ENCODE measurements at regions of chr5 and their contacts with region 1.

Region 1: GRCh38 chr5:138132543-138132942 is 6.7 kb downstream of the NME5 start:
- DNase-seq: no peak
- ATAC-seq: no peak

Region 2: DNA sequence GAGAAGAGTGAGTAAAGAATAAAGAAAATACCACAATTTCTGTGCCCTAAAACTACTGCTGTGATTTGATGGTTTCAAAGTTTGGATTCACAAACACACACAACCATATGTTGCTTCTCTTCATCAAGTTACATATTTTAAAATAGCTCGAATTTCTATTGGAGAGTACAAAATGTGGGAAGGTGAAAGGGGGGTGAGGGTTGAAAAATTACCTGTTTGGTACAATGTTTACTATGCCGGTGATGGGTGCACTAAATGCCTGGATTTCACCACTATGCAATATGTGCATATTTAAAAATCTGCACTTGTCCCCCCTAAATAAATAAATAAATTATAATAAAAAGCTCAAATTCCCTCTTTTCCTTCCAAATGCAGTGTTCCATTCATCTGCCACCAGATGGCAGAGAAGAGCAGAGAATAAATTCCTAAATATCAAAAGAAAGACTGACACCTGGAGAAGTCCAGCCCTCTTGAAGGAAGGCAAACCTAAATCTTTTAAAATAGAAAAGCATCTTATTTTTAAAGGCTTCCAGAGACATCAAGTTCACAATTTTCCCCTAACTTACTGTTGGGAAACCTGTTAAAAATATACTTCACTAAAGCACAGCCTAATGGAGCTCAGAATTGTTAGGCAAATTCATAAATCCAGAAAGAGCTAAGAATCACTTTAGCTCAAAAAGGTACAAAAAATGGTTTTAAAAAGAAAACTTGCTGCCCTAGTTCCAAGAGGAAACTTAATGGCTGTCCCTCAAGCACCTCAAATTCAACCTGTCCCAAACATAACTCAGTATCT is 353.6 kb before region 1 on chr5:
- intact Hi-C with region 1: loop called in 1 of 2 experiments (anchors 5 kb)
- DNase-seq: no peak
- ATAC-seq: peak; percentile 33

Region 3: GRCh38 chr5:138035605-138036537 is 96.7 kb before region 1 on chr5:
- intact Hi-C with region 1: loop called in 1 of 2 experiments (anchors 5 kb)
- DNase-seq: peak; percentile 52 to 55
- ATAC-seq: peak; percentile 43

Region 4: DNA sequence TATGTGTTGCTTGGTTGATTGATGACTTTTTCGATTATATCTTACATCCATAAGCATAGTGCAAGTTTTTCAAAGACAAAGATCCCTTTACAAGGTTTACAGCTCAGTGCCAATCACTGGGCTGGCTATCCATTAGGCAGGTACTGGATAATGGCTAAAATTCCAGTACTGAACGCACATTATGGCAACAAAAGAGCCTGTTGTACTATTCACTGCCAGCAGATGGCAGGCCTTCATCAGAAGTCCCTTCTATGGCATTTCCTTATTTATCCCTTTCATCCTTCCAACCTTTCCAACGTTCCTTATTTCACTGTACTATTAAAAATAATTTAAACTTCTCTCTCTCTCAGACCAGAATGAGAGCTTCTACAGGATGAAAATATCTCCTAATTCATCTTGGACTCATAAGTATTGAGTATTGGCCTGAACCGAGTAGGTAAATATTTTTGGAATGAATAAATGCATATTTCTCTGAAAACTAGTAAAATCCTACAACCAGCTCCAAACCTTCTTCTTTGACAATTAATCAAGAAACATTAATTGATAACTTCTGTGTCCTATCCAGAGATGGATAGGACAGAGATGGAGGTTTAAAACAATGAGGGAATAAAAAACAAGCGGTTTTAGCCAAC is 55.4 kb before region 1 on chr5:
- intact Hi-C with region 1: loop called (anchors 5 kb)
- DNase-seq: peak; percentile 33 to 76
- ATAC-seq: peak; percentile 74